ENCODE measurements at regions of chr9 and their contacts with region 1.

Region 1: GRCh38 chr9:98255578-98256296 is at the start of gene TBC1D2:
- DNase-seq: peak; percentile 98
- ATAC-seq: peak; percentile 88
- H3K4me3 Mint-ChIP-seq: peak within 1 kb of the TSS; percentile 82
- H3K27ac Mint-ChIP-seq: peak within 1 kb of the TSS; percentile 98
- H3K4me1 Mint-ChIP-seq: peaks cover 20% of the 10 kb centered on the region
- H3K27me3 Mint-ChIP-seq: peaks cover 7% of the 10 kb centered on the region
- total RNA-seq, gene TBC1D2: 2.7 to 5.0 TPM

Region 2: DNA sequence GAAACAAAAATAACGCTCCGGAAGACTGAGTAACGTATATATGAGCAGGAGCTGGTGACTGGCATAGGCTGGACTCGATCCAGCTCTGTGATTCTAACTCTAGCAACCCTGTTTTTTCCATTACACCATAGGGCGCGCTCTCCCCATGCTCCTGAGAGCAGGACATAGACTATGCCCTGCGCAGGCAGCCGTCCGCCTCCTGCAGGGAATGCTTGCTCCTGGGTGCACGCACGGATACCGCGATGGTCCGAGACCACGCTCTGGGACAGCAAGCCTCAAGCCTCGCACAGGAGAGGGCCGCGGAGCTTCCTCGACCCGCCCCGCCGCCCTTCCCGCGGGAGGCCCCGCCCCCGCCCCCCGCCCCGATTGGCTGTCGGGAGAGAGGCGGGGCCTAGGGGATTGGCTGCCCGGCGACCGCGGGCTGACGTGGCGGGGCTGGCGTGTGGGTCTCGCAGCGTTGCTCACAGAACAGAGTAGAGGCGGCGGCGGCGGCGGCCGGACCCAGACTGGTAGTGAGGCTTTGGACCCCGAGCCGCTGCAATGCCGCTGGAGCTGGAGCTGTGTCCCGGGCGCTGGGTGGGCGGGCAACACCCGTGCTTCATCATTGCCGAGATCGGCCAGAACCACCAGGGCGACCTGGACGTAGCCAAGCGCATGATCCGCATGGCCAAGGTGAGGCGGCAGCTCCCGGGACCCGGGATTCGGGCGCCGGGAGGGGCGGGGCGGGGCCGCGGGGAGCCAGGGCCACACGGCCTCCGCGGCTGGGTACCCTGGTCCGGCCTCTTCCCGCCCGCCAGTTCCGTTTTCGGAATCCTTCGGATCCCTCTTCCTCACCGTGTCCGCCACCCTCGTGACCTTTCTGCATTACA is 199.2 kb before region 1 on chr9 and contains the start of gene NANS:
- CTCF ChIA-PET with region 1: interaction called, 18 read pairs
- DNase-seq: peak; percentile 96
- ATAC-seq: peak; percentile 96
- H3K4me3 Mint-ChIP-seq: peak within 1 kb of the TSS; percentile 92
- H3K27ac Mint-ChIP-seq: peak within 1 kb of the TSS; percentile 95
- H3K4me1 Mint-ChIP-seq: peaks cover 43% of the 10 kb centered on the region
- H3K27me3 Mint-ChIP-seq: no peaks in the 10 kb centered on the region
- total RNA-seq, gene NANS: 35.5 to 47.8 TPM

Region 3: GRCh38 chr9:98101868-98102273 is 153.9 kb before region 1 on chr9:
- CTCF ChIA-PET with region 1: interaction called, 18 read pairs
- DNase-seq: peak; percentile 94
- ATAC-seq: peak; percentile 98
- H3K4me3 Mint-ChIP-seq: peak overlapping the region; percentile 77
- H3K27ac Mint-ChIP-seq: peak overlapping the region; percentile 99
- H3K4me1 Mint-ChIP-seq: peaks cover 88% of the 10 kb centered on the region
- H3K27me3 Mint-ChIP-seq: no peaks in the 10 kb centered on the region

Region 4: GRCh38 chr9:98192503-98193335 is 63.0 kb before region 1 on chr9 and contains the start of gene CORO2A:
- CTCF ChIA-PET with region 1: interaction called, 12 read pairs
- DNase-seq: peak; percentile 80
- ATAC-seq: peak; percentile 88
- H3K4me3 Mint-ChIP-seq: peak within 1 kb of the TSS; percentile 79
- H3K27ac Mint-ChIP-seq: peak within 1 kb of the TSS; percentile 71
- H3K4me1 Mint-ChIP-seq: peaks cover 11% of the 10 kb centered on the region
- H3K27me3 Mint-ChIP-seq: no peaks in the 10 kb centered on the region
- total RNA-seq, gene CORO2A: 6.2 to 11.5 TPM

Region 5: DNA sequence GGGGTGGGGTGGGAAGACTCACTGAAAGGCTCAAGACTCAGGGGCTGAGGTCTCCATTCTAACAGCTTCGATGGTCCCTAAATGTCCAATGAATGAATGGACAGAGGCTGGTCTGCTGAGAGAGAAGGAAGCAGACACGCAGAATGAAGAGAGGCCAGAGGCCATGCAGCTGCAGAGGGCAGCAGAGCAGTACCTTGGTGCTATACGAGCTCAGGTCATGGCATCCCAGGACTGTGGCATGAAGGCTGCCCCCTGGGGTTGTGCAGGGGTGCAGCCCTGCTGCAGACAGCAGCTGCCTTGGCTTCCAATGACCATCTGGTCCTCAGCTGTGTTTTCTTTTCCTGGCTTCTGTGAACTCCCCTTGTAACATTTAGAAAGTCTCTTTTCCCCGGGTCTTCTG is 48.1 kb before region 1 on chr9:
- CTCF ChIA-PET with region 1: interaction called, 38 read pairs
- DNase-seq: no peak
- ATAC-seq: no peak
- H3K4me3 Mint-ChIP-seq: no peak overlapping the region
- H3K27ac Mint-ChIP-seq: no peak overlapping the region
- H3K4me1 Mint-ChIP-seq: peaks cover 4% of the 10 kb centered on the region
- H3K27me3 Mint-ChIP-seq: no peaks in the 10 kb centered on the region

Measured in activated CD8-positive, alpha-beta memory T cell treated with anti-CD3 and anti-CD28 coated beads, Interleukin-2, amount 10 ng/mL, durations not matched to agents 7 days and 5 days (primary cell).